AG04450 (cell line): ENCODE measurements at regions of chr2 and their contacts with region 1.

Region 1: GRCh38 chr2:55050133-55050994 is at the start of gene RTN4:
- DNase-seq: peak; percentile 99
- H3K4me3 ChIP-seq: peak within 1 kb of the TSS; percentile 100
- H3K27ac ChIP-seq: peak within 1 kb of the TSS; percentile 99
- H3K27me3 ChIP-seq: no peaks in the 10 kb centered on the region
- CTCF ChIP-seq: peak; percentile 10; the same call in 1 of the 2 replicates
- polyA plus RNA-seq, gene RTN4: 652 and 668 TPM in 2 replicates

Region 2: GRCh38 chr2:54899576-54900200 is 150.7 kb before region 1 on chr2:
- CTCF ChIA-PET with region 1: interaction called, 17 read pairs
- POLR2A ChIA-PET with region 1: interaction called, 4 read pairs
- DNase-seq: peak; percentile 18
- H3K4me3 ChIP-seq: no peak overlapping the region
- H3K27ac ChIP-seq: no peak overlapping the region
- H3K27me3 ChIP-seq: no peaks in the 10 kb centered on the region
- CTCF ChIP-seq: peak; percentile 73

Region 3: DNA sequence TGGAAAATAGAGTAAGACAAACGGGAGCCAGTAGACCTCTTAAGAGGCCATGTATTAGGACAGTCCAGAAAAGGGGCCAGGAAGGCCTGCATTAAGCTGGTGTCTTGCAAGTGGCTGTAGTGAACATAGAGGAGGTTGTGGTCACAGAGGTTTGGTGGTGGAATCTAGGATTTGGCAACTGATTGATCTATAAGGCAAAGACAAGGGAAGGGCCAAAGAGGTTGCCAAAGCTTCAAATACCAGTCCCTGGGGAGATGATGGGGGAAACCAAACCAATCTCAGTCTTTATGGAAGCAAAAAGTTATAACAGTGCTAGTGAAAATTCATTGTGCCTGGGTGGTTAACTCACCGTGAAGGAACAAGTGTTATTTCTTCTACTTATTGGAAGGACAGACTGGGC is 28.6 kb after region 1 on chr2:
- CTCF ChIA-PET with region 1: no interaction called
- POLR2A ChIA-PET with region 1: no interaction called
- DNase-seq: no peak
- H3K4me3 ChIP-seq: no peak overlapping the region
- H3K27ac ChIP-seq: no peak overlapping the region
- H3K27me3 ChIP-seq: no peaks in the 10 kb centered on the region
- CTCF ChIP-seq: no peak

Region 4: GRCh38 chr2:55099878-55100820 is 49.8 kb after region 1 on chr2:
- CTCF ChIA-PET with region 1: interaction called, 3 read pairs
- POLR2A ChIA-PET with region 1: interaction called, 35 read pairs
- DNase-seq: no peak
- H3K4me3 ChIP-seq: peak overlapping the region; percentile 21
- H3K27ac ChIP-seq: peak overlapping the region; percentile 98
- H3K27me3 ChIP-seq: no peaks in the 10 kb centered on the region
- CTCF ChIP-seq: no peak

Region 5: GRCh38 chr2:55111570-55112228 is 61.3 kb after region 1 on chr2:
- CTCF ChIA-PET with region 1: interaction called, 3 read pairs
- POLR2A ChIA-PET with region 1: interaction called, 49 read pairs
- DNase-seq: peak; percentile 85
- H3K4me3 ChIP-seq: peak overlapping the region; percentile 15; the same call in 1 of the 2 replicates
- H3K27ac ChIP-seq: peak overlapping the region; percentile 96
- H3K27me3 ChIP-seq: no peaks in the 10 kb centered on the region
- CTCF ChIP-seq: no peak

Region 6: GRCh38 chr2:55153584-55154295 is 103.4 kb after region 1 on chr2:
- CTCF ChIA-PET with region 1: interaction called, 5 read pairs
- POLR2A ChIA-PET with region 1: interaction called, 24 read pairs
- DNase-seq: no peak
- H3K4me3 ChIP-seq: no peak overlapping the region
- H3K27ac ChIP-seq: no peak overlapping the region
- H3K27me3 ChIP-seq: no peaks in the 10 kb centered on the region
- CTCF ChIP-seq: no peak

Region 7: GRCh38 chr2:55168221-55169154 is 118.1 kb after region 1 on chr2:
- CTCF ChIA-PET with region 1: interaction called, 60 read pairs
- POLR2A ChIA-PET with region 1: interaction called, 79 read pairs
- DNase-seq: no peak
- H3K4me3 ChIP-seq: no peak overlapping the region
- H3K27ac ChIP-seq: peak overlapping the region; percentile 72
- H3K27me3 ChIP-seq: no peaks in the 10 kb centered on the region
- CTCF ChIP-seq: peak; percentile 73

Region 8: GRCh38 chr2:55175254-55176025 is 125.1 kb after region 1 on chr2:
- CTCF ChIA-PET with region 1: interaction called, 60 read pairs
- POLR2A ChIA-PET with region 1: interaction called, 4 read pairs
- DNase-seq: no peak
- H3K4me3 ChIP-seq: no peak overlapping the region
- H3K27ac ChIP-seq: no peak overlapping the region
- H3K27me3 ChIP-seq: no peaks in the 10 kb centered on the region
- CTCF ChIP-seq: peak; percentile 72